BJ (cell line): ENCODE measurements at regions of chr4 and their contacts with region 1.

Region 1: GRCh38 chr4:1872870-1873269 is 1.7 kb downstream of the NSD2 start:
- DNase-seq: no peak
- H3K4me3 ChIP-seq: no peak overlapping the region; the same call in 1 of the 2 replicates
- H3K27me3 ChIP-seq: no peaks in the 10 kb centered on the region
- CTCF ChIP-seq: no peak

Region 2: DNA sequence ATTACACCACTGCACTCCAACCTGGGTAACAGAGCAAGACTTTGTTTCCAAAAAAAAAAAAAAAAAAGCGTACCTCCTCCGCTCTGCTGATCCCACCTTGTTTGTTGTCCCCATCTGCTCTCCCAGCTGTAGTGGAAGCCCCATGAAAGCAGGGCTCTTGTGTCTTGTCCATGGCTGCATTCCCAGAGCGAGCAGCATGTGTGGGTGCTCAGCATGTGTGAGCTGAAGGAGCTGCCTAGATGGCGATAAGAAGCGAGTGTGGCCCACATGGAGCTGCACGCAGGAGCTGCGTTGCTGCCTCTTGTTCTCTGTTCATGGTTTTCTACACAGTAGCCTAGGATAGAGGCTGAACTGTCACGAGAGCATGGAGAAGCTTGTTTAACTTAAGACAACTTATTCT is 10.7 kb after region 1 on chr4:
- CTCF ChIA-PET with region 1: interaction called, 11 read pairs
- POLR2A ChIA-PET with region 1: no interaction called
- DNase-seq: no peak
- H3K4me3 ChIP-seq: no peak overlapping the region
- H3K27me3 ChIP-seq: no peaks in the 10 kb centered on the region
- CTCF ChIP-seq: no peak